Breast epithelium (tissue), 4 donors: ENCODE measurements at regions of chr3 and their contacts with region 1.

Region 1: GRCh38 chr3:150022381-150023238 is 51.9 kb upstream of the PFN2 start:
- DNase-seq: no peak
- H3K4me3 ChIP-seq: no peak overlapping the region
- H3K27ac ChIP-seq: no peak overlapping the region
- H3K4me1 ChIP-seq: no peaks in the 10 kb centered on the region
- H3K27me3 ChIP-seq: no peaks in the 10 kb centered on the region
- CTCF ChIP-seq: no peak
- POLR2A ChIP-seq: no peak

Region 2: DNA sequence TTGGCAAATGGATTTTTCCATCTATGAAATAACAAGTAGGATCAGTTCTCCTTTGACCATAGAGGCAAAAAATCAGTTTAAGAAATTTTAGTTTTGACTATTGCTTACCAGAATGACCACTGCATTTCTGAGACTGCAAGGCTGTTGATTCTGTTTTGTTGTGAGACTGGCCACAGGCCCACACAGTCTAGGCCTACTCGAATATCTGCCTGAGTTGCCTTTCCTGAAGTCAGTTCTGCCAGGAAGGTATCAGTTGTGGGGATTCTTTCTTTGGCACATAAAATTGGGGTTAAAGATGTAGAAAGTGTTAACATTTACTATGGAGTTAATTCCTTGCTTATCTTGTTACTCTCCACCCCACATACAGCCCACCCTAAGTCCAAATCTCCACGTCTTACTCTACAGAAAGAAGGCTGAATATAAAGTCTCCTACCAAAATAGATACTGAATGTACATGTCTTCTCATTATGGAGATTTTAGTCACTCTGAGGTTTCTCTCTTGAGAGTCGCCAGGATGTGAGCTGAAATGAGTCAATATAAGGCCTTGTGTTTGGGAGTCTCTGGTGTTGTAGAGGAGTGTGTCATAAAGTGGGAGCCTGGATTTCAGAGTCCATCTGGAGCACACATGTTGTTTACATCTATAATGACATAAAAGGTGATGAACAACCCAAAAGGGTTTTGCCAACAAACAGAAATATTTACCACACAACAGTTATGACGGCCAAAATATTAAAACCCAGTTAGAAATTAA is 319.7 kb before region 1 on chr3:
- intact Hi-C with region 1: no loop called
- DNase-seq: no peak
- H3K4me3 ChIP-seq: no peak overlapping the region
- H3K27ac ChIP-seq: peak overlapping the region; percentile 34 to 68
- H3K4me1 ChIP-seq: no peaks in the 10 kb centered on the region
- H3K27me3 ChIP-seq: no peaks in the 10 kb centered on the region
- CTCF ChIP-seq: no peak
- POLR2A ChIP-seq: no peak

Region 3: GRCh38 chr3:149860881-149861280 is 161.7 kb before region 1 on chr3:
- intact Hi-C with region 1: no loop called
- DNase-seq: no peak
- H3K4me3 ChIP-seq: no peak overlapping the region
- H3K27ac ChIP-seq: no peak overlapping the region
- H3K4me1 ChIP-seq: no peaks in the 10 kb centered on the region
- H3K27me3 ChIP-seq: no peaks in the 10 kb centered on the region
- CTCF ChIP-seq: no peak
- POLR2A ChIP-seq: no peak

Region 4: GRCh38 chr3:150049317-150049716 is 26.7 kb after region 1 on chr3:
- intact Hi-C with region 1: loop called (anchors 1 kb)
- DNase-seq: no peak
- H3K4me3 ChIP-seq: no peak overlapping the region
- H3K27ac ChIP-seq: no peak overlapping the region
- H3K4me1 ChIP-seq: no peaks in the 10 kb centered on the region
- H3K27me3 ChIP-seq: no peaks in the 10 kb centered on the region
- CTCF ChIP-seq: no peak
- POLR2A ChIP-seq: no peak